Right cardiac atrium (tissue), 5 donors: ENCODE measurements at regions of chr7 and their contacts with region 1.

Region 1: DNA sequence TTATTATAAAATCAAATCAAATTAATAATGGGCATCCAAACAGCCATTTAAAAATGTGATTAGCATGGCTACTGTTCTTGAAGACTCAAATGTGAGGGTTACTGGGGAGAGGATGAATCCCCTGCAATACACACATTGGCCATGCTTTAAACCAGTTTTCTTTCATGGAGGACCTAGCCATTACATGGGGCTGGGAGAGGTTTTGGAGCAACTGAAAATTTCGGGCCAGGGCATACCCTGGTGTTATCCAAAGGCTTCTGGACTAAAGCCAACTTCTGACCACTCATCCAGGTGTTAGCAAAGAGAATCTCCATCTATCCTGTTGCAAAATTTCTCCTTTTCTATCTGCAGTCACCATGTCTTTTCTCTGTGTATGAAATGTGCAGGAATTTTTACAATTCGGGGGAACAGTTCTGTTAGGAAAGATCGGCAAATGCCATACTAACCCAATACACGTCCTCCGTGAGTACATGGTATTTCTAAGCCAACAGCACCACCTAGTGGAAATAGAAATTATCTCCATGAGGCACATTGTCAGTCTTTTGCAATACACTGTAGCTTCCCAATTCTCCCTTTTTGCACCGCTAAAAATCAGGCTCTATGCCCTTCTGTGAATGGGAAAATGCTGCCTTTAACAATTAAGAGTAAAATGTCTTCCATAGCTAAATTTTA is 47.0 kb upstream of the ZNF107 start:
- DNase-seq: no peak
- ATAC-seq: peak; percentile 76 to 88
- H3K4me3 ChIP-seq: no peak overlapping the region
- H3K27ac ChIP-seq: no peak overlapping the region
- H3K4me1 ChIP-seq: no peaks in the 10 kb centered on the region
- H3K27me3 ChIP-seq: no peaks in the 10 kb centered on the region

Region 2: DNA sequence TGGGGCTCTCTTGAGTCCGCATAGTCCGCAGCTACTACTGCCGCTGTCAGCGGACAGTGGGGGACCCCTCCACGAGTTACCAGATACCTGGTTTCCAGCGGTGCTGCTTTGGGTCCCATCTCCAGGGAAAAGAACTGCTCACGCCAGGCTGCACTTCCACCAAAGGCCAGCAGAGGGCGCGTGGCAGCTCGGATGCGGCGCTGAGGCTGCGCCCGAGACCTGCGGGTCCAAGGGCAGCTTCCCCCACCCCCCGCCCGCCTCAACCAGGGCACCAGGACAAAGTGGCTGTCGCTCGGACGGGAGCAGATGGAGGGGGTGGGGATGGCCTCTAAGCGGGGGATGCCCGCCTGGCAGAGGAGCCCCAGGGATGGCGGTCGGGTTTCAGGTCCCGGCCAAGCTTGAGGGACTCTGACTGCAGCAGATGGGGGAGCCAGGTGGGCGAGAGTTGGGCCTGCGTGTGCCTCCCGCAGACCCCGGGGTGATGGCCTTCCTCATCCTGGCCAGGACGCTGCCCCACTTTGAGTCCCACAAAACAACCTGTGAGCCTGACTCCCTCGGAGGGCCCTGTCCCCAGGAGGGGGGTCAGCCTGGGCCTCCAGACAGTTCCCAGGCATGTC is 435.7 kb before region 1 on chr7:
- intact Hi-C with region 1: loop called (anchors 2 to 5 kb)
- DNase-seq: peak in 2 of 3 donors; percentile 70 to 72
- ATAC-seq: peak; percentile 31 to 53
- H3K4me3 ChIP-seq: no peak overlapping the region
- H3K27ac ChIP-seq: no peak overlapping the region
- H3K4me1 ChIP-seq: no peaks in the 10 kb centered on the region
- H3K27me3 ChIP-seq: no peaks in the 10 kb centered on the region

Region 3: GRCh38 chr7:64307254-64308015 is 311.5 kb before region 1 on chr7:
- intact Hi-C with region 1: loop called in 1 of 4 experiments (anchors 10 kb)
- DNase-seq: peak; percentile 93 to 98 (median 97)
- ATAC-seq: peak; percentile 99 to 100
- H3K4me3 ChIP-seq: peak overlapping the region; percentile 69
- H3K27ac ChIP-seq: peak overlapping the region; percentile 82
- H3K4me1 ChIP-seq: peaks cover 2% of the 10 kb centered on the region
- H3K27me3 ChIP-seq: no peaks in the 10 kb centered on the region